MCF 10A (cell line): ENCODE measurements at regions of chr3 and their contacts with region 1.

Region 1: GRCh38 chr3:111936191-111936841 is 42.5 kb upstream of the ABHD10 start:
- DNase-seq: peak; percentile 19
- H3K4me3 Mint-ChIP-seq: peak overlapping the region; percentile 25
- H3K27ac Mint-ChIP-seq: peak overlapping the region; percentile 87
- H3K4me1 Mint-ChIP-seq: peaks cover 11% of the 10 kb centered on the region
- H3K27me3 Mint-ChIP-seq: no peaks in the 10 kb centered on the region
- CTCF ChIP-seq: no peak

Region 2: DNA sequence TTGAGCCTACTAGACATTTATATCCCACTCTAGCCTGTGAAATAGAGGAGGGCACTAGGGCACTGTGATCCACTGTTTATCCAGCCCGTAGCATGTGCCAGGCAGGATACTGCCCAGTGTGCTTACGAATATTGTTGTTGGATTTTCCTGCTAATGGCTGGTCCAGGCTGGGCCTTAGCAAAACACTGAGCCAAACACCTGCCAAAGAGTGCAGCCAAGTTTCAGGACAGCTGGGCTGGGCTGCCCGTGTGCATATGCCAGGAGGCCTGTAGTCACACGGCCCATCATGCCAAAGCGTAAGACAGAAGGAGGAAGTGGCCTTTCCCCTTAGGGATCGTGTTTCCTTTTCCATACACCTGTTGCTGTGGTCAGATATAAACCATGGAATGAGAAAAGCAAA is 12.0 kb before region 1 on chr3:
- CTCF ChIA-PET with region 1: interaction called, 3 read pairs
- POLR2A ChIA-PET with region 1: interaction called, 23 read pairs
- intact Hi-C with region 1: no loop called
- DNase-seq: peak; percentile 75
- H3K4me3 Mint-ChIP-seq: peak overlapping the region; percentile 43
- H3K27ac Mint-ChIP-seq: peak overlapping the region; percentile 93
- H3K4me1 Mint-ChIP-seq: peaks cover 28% of the 10 kb centered on the region
- H3K27me3 Mint-ChIP-seq: no peaks in the 10 kb centered on the region
- CTCF ChIP-seq: no peak